Gastrocnemius medialis (tissue), 4 donors: ENCODE measurements at regions of chr16 and their contacts with region 1.

Region 1: DNA sequence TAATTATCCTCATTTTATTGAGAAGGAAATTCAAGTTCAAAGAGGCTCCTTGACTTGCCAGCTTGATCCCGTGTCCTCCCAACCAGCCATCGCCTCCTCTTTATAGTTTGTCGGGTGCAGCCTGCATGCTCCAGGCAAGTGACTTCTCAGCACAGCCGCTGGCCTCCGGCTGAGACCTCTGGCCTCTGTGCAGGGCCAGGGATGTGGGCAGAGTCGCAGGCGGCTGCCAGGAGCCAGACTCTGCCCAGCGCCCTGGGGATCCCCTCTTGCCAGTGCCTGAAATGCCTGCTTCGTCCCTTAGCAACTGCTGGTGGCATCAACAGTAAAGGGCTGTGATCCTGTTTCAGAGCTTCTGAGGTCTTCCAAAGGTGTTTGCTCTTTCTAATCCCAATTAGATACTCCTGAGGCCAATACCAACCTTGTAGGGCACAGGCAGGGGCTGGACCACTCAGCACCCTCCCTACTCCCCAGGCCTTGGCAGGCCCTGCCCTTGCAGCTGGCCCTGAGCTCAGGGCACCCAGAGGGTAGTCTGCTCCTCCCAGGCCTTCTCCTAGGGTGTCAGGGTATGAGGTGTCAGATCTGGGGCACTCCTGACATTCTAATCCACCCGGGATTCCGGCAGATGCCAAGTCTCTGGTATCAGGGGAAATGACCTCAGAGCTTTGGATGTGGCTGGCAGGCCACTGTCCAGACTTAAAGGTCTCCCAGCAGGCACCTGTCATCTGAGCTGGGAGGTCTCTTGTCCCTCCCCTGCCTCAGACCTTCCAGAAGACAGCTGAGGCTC is 68.0 kb upstream of the SIAH1 start:
- DNase-seq: peak; percentile 16 to 86
- ATAC-seq: peak; percentile 55 to 92
- H3K4me3 ChIP-seq: no peak overlapping the region
- H3K27ac ChIP-seq: peak overlapping the region; percentile 14 to 70 (median 64)
- H3K4me1 ChIP-seq: peaks cover 10 to 17% of the 10 kb centered on the region in 2 donors
- H3K27me3 ChIP-seq: no peaks in the 10 kb centered on the region
- CTCF ChIP-seq: no peak
- POLR2A ChIP-seq: no peak

Region 2: GRCh38 chr16:48365581-48366164 is 87.5 kb before region 1 on chr16:
- in situ Hi-C with region 1: no loop called
- intact Hi-C with region 1: loop called (anchors 10 kb)
- DNase-seq: peak; percentile 82 to 90
- ATAC-seq: peak; percentile 81 to 85
- H3K4me3 ChIP-seq: peak overlapping the region; percentile 62 to 74 (median 72)
- H3K27ac ChIP-seq: peak overlapping the region; percentile 91 to 95 (median 92)
- H3K4me1 ChIP-seq: peaks cover 51 to 55% of the 10 kb centered on the region in 2 donors
- H3K27me3 ChIP-seq: no peaks in the 10 kb centered on the region
- CTCF ChIP-seq: no peak
- POLR2A ChIP-seq: peak; percentile 84 to 96

Region 3: GRCh38 chr16:48687421-48688038 is 234.4 kb after region 1 on chr16:
- in situ Hi-C with region 1: no loop called
- intact Hi-C with region 1: no loop called
- DNase-seq: no peak
- ATAC-seq: peak; percentile 45 to 53
- H3K4me3 ChIP-seq: no peak overlapping the region
- H3K27ac ChIP-seq: no peak overlapping the region
- H3K4me1 ChIP-seq: no peaks in the 10 kb centered on the region
- H3K27me3 ChIP-seq: no peaks in the 10 kb centered on the region
- CTCF ChIP-seq: peak in 4 of 5 experiments; percentile 27 to 67 (median 48)
- POLR2A ChIP-seq: no peak